Transverse colon (tissue), 4 donors: ENCODE measurements at regions of chr12 and their contacts with region 1.

Region 1: GRCh38 chr12:99619389-99620158 is 28.0 kb upstream of the GARIN6 start:
- DNase-seq: no peak
- H3K4me3 ChIP-seq: no peak overlapping the region
- H3K27ac ChIP-seq: no peak overlapping the region
- H3K4me1 ChIP-seq: no peaks in the 10 kb centered on the region
- H3K27me3 ChIP-seq: no peaks in the 10 kb centered on the region
- CTCF ChIP-seq: peak in 3 of 5 experiments; percentile 24 to 29 (median 27)
- EP300 ChIP-seq: no peak
- POLR2A ChIP-seq: no peak

Region 2: GRCh38 chr12:98085050-98085755 is 1534.4 kb before region 1 on chr12:
- in situ Hi-C with region 1: no loop called
- intact Hi-C with region 1: loop called (anchors 5 kb)
- DNase-seq: no peak
- H3K4me3 ChIP-seq: no peak overlapping the region
- H3K27ac ChIP-seq: no peak overlapping the region
- H3K4me1 ChIP-seq: peaks cover 0 to 3% (median 0%) of the 10 kb centered on the region in 4 donors
- H3K27me3 ChIP-seq: no peaks in the 10 kb centered on the region
- CTCF ChIP-seq: no peak
- EP300 ChIP-seq: no peak
- POLR2A ChIP-seq: no peak

Region 3: GRCh38 chr12:99386907-99387306 is 232.7 kb before region 1 on chr12:
- in situ Hi-C with region 1: no loop called
- intact Hi-C with region 1: no loop called
- DNase-seq: no peak
- H3K4me3 ChIP-seq: no peak overlapping the region
- H3K27ac ChIP-seq: no peak overlapping the region
- H3K4me1 ChIP-seq: no peaks in the 10 kb centered on the region
- H3K27me3 ChIP-seq: no peaks in the 10 kb centered on the region
- CTCF ChIP-seq: no peak
- EP300 ChIP-seq: no peak
- POLR2A ChIP-seq: no peak